Cardiac septum (tissue), 1 donor: ENCODE measurements at regions of chr18 and their contacts with region 1.

Region 1: GRCh38 chr18:12278741-12279682 is 24.9 kb downstream of the CIDEA start:
- DNase-seq: peak; percentile 94

Region 2: GRCh38 chr18:12317664-12318333 is 38.8 kb after region 1 on chr18:
- intact Hi-C with region 1: loop called (anchors 5 kb)
- DNase-seq: no peak

Region 3: DNA sequence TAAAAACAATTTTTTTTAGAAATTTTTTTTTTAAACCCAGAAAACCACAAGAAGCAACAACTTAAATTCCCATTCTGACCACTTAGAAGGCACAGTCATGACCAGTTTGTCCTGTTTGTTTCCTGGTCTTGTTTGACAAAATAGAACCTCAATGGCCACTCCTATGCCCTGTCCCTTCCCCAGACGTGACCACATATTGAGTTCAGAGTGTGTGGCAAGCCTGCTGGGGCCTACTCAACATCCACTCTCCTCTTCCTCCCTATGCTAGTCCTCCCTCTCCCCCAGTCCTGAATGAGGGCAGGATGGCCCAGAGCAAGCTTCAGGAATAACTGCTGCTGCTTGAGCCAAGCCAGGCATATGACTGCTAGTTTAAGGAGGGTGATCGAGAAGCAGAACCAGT is 218.3 kb after region 1 on chr18:
- intact Hi-C with region 1: no loop called
- DNase-seq: no peak

Region 4: DNA sequence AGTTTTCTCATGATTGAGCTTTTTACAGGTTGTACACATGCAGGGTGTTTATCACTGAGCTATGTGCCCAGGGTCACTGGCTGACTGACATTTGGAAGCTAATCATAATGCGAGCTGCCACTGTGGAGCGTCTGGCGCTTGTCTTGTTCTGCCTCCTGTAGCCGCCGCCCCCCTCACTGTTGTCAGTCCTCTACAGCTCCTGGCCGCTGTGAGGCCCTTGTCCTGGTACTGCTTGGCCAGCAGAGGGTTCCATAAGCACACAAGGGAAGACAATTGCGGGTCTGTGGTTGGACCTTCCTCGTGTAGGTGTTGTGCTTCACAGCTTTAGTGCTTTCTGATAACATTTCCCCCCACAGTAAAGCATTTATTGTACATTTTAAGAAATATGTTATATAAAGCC is 834.0 kb after region 1 on chr18:
- intact Hi-C with region 1: no loop called
- DNase-seq: peak; percentile 86